Mammary epithelial cell (primary cell): ENCODE measurements at regions of chr6 and their contacts with region 1.

Region 1: DNA sequence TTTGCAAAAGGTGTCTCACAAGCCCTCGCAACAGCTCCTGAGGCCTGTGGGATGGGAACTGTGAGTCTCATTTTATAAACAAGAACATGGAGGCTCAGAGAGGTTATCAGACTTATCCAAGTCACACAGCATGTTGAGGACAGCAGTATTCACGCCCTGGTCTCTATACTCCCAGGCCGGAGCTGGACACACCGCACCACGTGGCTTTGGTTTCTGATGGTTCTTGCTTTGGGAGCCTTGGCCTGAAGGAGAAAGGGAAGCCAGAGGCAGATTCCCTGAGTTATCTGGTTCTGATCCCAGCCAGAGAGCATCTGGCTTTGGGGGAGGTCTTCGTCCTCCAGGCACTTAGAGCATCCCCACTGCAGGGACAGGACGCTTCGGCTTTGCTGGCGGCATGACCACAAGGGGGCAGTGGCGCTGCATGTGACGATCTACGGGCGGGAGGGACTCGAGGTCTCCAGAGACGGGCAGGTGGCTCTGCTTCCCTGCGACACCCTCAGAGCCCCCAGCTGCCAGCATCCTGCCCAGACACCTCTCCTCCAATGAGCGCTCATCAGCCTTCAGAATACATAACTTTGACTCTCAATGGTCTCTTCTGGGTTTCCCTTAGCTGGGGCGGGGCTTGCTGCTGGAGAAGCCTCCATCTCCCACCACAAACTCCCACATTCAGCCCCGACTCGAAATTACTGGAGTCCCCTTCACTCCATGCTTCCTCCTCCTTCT is 51.4 kb upstream of the SAYSD1 start:
- DNase-seq: peak; percentile 33
- H3K4me3 ChIP-seq: no peak overlapping the region
- H3K27ac ChIP-seq: no peak overlapping the region
- H3K4me1 ChIP-seq: peaks cover 4% of the 10 kb centered on the region
- H3K27me3 ChIP-seq: no peaks in the 10 kb centered on the region
- CTCF ChIP-seq: peak; percentile 75 to 95

Region 2: DNA sequence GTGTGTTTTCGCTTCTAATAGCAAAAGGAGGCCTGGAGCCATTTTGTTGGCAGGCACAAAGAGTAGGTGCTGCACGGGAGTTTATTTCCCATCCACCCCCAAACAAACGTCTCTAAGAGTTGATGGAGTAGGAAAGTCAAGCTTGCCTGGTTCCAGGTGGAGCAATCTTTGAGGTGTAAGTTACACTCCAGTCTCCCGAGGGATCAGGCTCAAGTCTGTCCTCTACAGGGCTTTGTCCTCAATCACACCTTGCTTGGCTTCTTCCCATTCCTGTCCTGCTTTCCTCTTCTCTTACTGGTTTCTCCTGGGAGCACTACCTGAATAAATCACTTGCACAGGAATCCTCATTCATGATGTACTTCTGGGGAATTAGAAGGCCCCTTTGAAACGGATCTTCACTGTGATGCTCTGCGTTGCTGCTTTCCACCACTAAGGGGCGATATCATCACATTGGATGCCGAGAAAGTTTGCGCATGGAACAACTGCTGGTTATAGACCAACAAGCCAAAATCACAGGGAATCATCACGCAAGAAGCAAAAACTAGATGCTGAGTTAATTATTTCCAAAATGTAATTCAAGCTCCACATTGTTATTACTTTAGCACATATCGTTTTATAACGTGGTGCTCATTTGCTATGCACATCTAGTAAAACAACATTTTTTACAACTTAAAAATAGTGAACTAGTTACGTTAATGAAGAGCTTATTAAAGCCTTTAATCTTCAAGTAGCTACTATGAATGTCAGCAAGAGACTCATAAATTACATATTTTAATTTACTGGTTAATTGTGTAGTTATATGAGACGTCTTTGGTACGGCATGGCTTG is 294.4 kb before region 1 on chr6:
- CTCF ChIA-PET with region 1: no interaction called
- dilution Hi-C with region 1: no loop called
- in situ Hi-C with region 1: no loop called
- intact Hi-C with region 1: loop called (anchors 10 kb)
- DNase-seq: peak; percentile 34
- H3K4me3 ChIP-seq: no peak overlapping the region
- H3K27ac ChIP-seq: no peak overlapping the region
- H3K4me1 ChIP-seq: no peaks in the 10 kb centered on the region
- H3K27me3 ChIP-seq: no peaks in the 10 kb centered on the region
- CTCF ChIP-seq: peak; percentile 95 to 99

Region 3: DNA sequence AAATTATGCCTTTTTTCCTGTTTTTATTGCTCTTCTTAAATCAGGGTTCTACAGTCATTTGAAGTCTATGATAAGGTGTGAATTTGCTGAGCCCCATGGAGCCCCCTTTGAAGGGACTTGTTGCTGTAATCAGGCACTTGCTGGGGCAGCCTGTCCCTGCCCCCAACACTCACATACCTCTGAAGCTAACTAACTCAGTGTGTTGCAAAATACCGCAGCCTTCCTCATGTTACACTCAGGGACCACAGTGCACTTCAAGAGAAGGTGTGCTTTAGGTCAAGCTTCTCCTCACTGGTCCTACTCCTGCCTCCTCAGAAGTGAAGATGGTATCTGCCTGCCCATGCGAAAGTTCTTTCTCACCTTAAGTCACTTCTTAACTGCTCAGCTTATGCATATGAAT is 183.9 kb before region 1 on chr6:
- CTCF ChIA-PET with region 1: no interaction called
- dilution Hi-C with region 1: loop called (anchors 5 kb)
- in situ Hi-C with region 1: loop called in 1 of 2 experiments (anchors 10 kb)
- intact Hi-C with region 1: no loop called
- DNase-seq: no peak
- H3K4me3 ChIP-seq: no peak overlapping the region
- H3K27ac ChIP-seq: no peak overlapping the region
- H3K4me1 ChIP-seq: no peaks in the 10 kb centered on the region
- H3K27me3 ChIP-seq: peaks cover 6% of the 10 kb centered on the region
- CTCF ChIP-seq: no peak

Region 4: DNA sequence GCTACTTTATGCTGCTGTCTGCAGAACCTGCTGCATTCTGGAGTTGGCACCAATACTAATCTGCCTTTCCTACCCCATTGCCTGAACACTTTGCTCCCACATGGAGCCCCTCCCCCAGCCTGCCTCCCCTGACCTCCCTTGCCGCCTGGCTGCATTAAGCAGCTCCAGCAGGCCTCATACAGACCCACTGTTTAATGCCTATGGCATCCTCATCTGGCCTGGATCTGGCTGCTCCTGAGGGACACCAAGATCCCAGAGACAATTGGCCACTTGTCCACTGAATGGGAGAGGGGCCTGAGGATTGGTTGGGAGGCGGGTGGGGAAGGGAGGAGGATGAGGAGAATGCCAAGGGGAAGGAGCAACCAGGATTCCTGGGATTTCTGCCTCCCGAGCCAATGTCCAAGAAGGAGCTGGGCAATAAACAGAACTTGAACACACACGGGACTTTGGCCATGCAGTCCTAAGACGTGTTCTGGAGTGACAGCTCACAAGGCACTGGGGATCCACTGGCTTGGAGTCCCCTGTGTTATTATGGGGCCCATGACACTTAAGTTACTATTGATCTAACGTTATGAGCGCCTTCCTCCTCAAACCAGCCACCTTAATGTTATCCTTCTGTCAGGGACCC is 73.3 kb after region 1 on chr6:
- CTCF ChIA-PET with region 1: no interaction called
- dilution Hi-C with region 1: loop called (anchors 5 kb)
- in situ Hi-C with region 1: no loop called
- intact Hi-C with region 1: no loop called
- DNase-seq: no peak
- H3K4me3 ChIP-seq: no peak overlapping the region
- H3K27ac ChIP-seq: no peak overlapping the region
- H3K4me1 ChIP-seq: peaks cover 5% of the 10 kb centered on the region
- H3K27me3 ChIP-seq: no peaks in the 10 kb centered on the region
- CTCF ChIP-seq: no peak

Region 5: GRCh38 chr6:39309942-39310531 is 143.7 kb after region 1 on chr6:
- CTCF ChIA-PET with region 1: no interaction called
- dilution Hi-C with region 1: no loop called
- in situ Hi-C with region 1: loop called in 1 of 2 experiments (anchors 5 kb)
- intact Hi-C with region 1: loop called (anchors 1 kb)
- DNase-seq: peak; percentile 50
- H3K4me3 ChIP-seq: no peak overlapping the region
- H3K27ac ChIP-seq: no peak overlapping the region
- H3K4me1 ChIP-seq: no peaks in the 10 kb centered on the region
- H3K27me3 ChIP-seq: peaks cover 18% of the 10 kb centered on the region
- CTCF ChIP-seq: peak; percentile 93 to 94